Dorsolateral prefrontal cortex (tissue), 120 donors: ENCODE measurements at regions of chrX and their contacts with region 1.

Region 1: DNA sequence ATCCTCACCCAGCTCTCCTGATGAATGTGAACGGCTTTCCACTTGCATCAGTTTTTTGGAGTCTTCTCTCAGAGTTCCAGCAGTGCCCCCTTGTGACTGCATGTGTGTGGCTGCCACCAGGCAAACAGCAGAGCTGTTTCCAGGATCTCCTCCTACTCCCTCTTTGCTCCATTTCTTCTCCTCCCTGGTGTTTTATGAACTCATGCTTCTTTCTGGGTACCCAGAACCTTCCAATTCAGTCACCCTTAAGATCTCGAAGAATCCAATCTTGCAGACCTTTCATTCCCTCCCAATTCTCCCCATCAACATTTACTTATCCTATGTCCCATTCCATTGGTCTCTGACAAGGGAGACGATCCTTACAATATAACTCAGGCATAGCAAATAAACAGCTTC is 6.8 kb upstream of the TCEANC start:
- DNase-seq: peak in 8 of 10 donors; percentile 25 to 58 (median 54)
- H3K4me3 ChIP-seq: no peak overlapping the region
- H3K27ac ChIP-seq: no peak overlapping the region
- H3K27me3 ChIP-seq: peaks cover 0 to 67% (median 22%) of the 10 kb centered on the region in 45 donors
- CTCF ChIP-seq: peak in 54 of 56 donors; percentile 29 to 77 (median 60)

Region 2: GRCh38 chrX:13506574-13506973 is 139.6 kb before region 1 on chrX:
- intact Hi-C with region 1: loop called (anchors 2 to 5 kb)
- DNase-seq: peak in 1 of 10 donors; percentile 7
- H3K4me3 ChIP-seq: no peak overlapping the region
- H3K27ac ChIP-seq: no peak overlapping the region
- H3K27me3 ChIP-seq: peaks cover 0 to 65% (median 8%) of the 10 kb centered on the region in 45 donors
- CTCF ChIP-seq: peak; percentile 55 to 90 (median 78)

Region 3: DNA sequence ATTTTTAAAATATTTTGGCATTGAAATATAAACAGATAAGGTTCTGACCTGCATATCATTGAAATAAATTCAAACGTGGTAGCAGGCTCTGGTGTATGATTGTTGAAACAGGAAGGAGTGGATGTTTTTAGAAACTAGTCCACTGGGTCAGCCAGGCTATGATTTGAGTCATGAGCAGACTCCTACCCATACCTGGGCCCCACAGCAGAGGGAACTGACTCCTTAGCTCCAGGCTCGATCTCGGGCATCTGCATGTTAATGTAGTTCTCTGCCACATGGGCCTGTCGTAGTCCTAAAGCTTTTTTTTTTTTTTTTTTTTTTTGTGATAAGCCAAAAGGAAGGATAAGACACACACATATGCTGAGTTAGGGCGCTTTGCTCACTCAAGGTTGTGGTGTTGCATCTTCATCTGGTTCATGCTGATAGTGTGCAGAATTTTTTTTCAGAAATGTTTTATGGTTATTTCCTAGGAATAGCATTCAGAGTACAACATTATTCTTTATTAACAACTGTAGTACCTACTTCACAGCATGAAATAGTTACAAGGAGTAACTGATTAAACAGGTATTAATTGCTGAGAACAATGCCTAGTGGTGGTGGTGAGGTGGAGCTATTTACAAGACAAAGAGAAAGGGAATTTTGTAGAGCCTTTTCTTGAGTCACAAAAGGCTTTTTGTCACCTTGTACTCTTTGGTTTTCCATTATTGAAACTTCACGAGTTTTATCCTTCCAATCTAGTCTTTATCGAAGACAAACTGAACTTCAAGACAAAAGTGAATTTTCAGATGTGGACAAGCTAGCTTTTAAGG is 115.7 kb after region 1 on chrX:
- intact Hi-C with region 1: no loop called
- DNase-seq: no peak
- H3K4me3 ChIP-seq: no peak overlapping the region
- H3K27ac ChIP-seq: peak overlapping the region in 33 of 59 donors; percentile 14 to 90 (median 73)
- H3K27me3 ChIP-seq: peaks cover 0 to 56% (median 5%) of the 10 kb centered on the region in 45 donors
- CTCF ChIP-seq: no peak

Region 4: DNA sequence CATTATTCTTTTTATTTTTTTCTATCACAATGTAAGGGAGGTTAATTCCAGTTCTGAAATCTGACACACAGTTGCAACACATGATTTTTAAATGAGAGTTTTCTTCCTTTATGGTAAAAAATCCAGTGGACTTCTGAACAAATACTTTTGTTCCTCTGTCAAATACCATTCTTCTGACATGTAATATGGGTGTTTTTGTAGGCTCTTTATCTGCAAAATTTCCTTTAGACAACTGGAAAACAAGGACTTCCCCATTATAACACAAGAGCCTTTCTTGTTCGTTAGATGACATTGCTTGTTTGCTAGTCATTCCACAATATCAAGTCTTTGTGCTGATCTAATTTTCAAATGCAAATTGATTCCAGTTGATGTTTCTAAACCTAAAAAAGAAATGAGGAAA is 1219.0 kb after region 1 on chrX:
- intact Hi-C with region 1: no loop called
- DNase-seq: no peak
- H3K4me3 ChIP-seq: peak overlapping the region in 4 of 59 donors; percentile 1 to 20 (median 8)
- H3K27ac ChIP-seq: peak overlapping the region in 57 of 59 donors; percentile 8 to 92 (median 81)
- H3K27me3 ChIP-seq: peaks cover 0 to 17% (median 0%) of the 10 kb centered on the region in 45 donors
- CTCF ChIP-seq: no peak